ENCODE measurements at regions of chr11 and their contacts with region 1.

Region 1: GRCh38 chr11:65779851-65780577 is 762 bp downstream of the AP5B1 start:
- DNase-seq: peak; percentile 82
- H3K4me3 Mint-ChIP-seq: peak overlapping the region; percentile 84
- H3K27ac Mint-ChIP-seq: peak overlapping the region; percentile 90
- H3K4me1 Mint-ChIP-seq: peaks cover 12% of the 10 kb centered on the region
- H3K27me3 Mint-ChIP-seq: peaks cover 17% of the 10 kb centered on the region

Region 2: GRCh38 chr11:65540297-65541092 is 239.5 kb before region 1 on chr11:
- CTCF ChIA-PET with region 1: no interaction called
- POLR2A ChIA-PET with region 1: no interaction called
- DNase-seq: peak; percentile 85
- H3K4me3 Mint-ChIP-seq: peak overlapping the region; percentile 78
- H3K27ac Mint-ChIP-seq: peak overlapping the region; percentile 88
- H3K4me1 Mint-ChIP-seq: peaks cover 19% of the 10 kb centered on the region
- H3K27me3 Mint-ChIP-seq: no peaks in the 10 kb centered on the region

Region 3: GRCh38 chr11:65633390-65634108 is 146.5 kb before region 1 on chr11:
- CTCF ChIA-PET with region 1: no interaction called
- POLR2A ChIA-PET with region 1: no interaction called
- DNase-seq: peak; percentile 38
- H3K4me3 Mint-ChIP-seq: no peak overlapping the region
- H3K27ac Mint-ChIP-seq: peak overlapping the region; percentile 55
- H3K4me1 Mint-ChIP-seq: peaks cover 28% of the 10 kb centered on the region
- H3K27me3 Mint-ChIP-seq: no peaks in the 10 kb centered on the region

Region 4: GRCh38 chr11:65680192-65680743 is 99.7 kb before region 1 on chr11:
- CTCF ChIA-PET with region 1: no interaction called
- POLR2A ChIA-PET with region 1: no interaction called
- DNase-seq: no peak
- H3K4me3 Mint-ChIP-seq: no peak overlapping the region
- H3K27ac Mint-ChIP-seq: no peak overlapping the region
- H3K4me1 Mint-ChIP-seq: peaks cover 3% of the 10 kb centered on the region
- H3K27me3 Mint-ChIP-seq: peaks cover 5% of the 10 kb centered on the region

Region 5: GRCh38 chr11:65711785-65712632 is 68.0 kb before region 1 on chr11 and contains the start of gene KAT5:
- CTCF ChIA-PET with region 1: interaction called, 21 read pairs
- POLR2A ChIA-PET with region 1: no interaction called
- DNase-seq: peak; percentile 99
- H3K4me3 Mint-ChIP-seq: peak within 1 kb of the TSS; percentile 82
- H3K27ac Mint-ChIP-seq: peak within 1 kb of the TSS; percentile 97
- H3K4me1 Mint-ChIP-seq: peaks cover 35% of the 10 kb centered on the region
- H3K27me3 Mint-ChIP-seq: no peaks in the 10 kb centered on the region
- total RNA-seq, gene KAT5: 60.8 to 72.3 TPM

Region 6: DNA sequence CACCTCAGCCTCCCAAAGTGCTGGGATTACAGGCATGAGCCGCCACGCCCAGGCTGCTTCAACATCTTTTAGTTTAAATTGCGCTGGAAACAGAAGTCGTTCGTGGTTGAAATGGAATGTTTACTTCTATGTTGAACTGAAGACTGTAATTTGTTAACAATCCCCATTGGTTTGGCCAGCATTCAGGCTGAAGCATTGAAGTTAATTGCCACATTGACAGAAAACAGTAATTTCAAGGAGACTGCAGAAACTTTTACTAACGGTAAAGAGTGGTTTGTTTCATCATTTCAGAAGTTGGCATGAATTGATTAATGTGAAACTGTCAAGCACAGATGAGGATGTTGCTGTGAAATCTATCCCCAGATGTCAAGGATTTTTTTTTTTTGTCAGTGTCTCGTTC is 13.5 kb before region 1 on chr11:
- CTCF ChIA-PET with region 1: interaction called, 36 read pairs
- POLR2A ChIA-PET with region 1: no interaction called
- DNase-seq: no peak
- H3K4me3 Mint-ChIP-seq: no peak overlapping the region
- H3K27ac Mint-ChIP-seq: no peak overlapping the region
- H3K4me1 Mint-ChIP-seq: peaks cover 4% of the 10 kb centered on the region
- H3K27me3 Mint-ChIP-seq: peaks cover 5% of the 10 kb centered on the region

Region 7: GRCh38 chr11:65796726-65797601 is 16.9 kb after region 1 on chr11:
- CTCF ChIA-PET with region 1: interaction called, 73 read pairs
- POLR2A ChIA-PET with region 1: no interaction called
- DNase-seq: no peak
- H3K4me3 Mint-ChIP-seq: no peak overlapping the region
- H3K27ac Mint-ChIP-seq: no peak overlapping the region
- H3K4me1 Mint-ChIP-seq: peaks cover 7% of the 10 kb centered on the region
- H3K27me3 Mint-ChIP-seq: peaks cover 11% of the 10 kb centered on the region

Region 8: GRCh38 chr11:65817835-65818742 is 38.1 kb after region 1 on chr11:
- CTCF ChIA-PET with region 1: interaction called, 62 read pairs
- POLR2A ChIA-PET with region 1: interaction called, 4 read pairs
- DNase-seq: peak; percentile 93
- H3K4me3 Mint-ChIP-seq: peak overlapping the region; percentile 74
- H3K27ac Mint-ChIP-seq: peak overlapping the region; percentile 79
- H3K4me1 Mint-ChIP-seq: peaks cover 20% of the 10 kb centered on the region
- H3K27me3 Mint-ChIP-seq: peaks cover 4% of the 10 kb centered on the region

Region 9: GRCh38 chr11:65859200-65859811 is 79.3 kb after region 1 on chr11:
- CTCF ChIA-PET with region 1: interaction called, 22 read pairs
- POLR2A ChIA-PET with region 1: no interaction called
- DNase-seq: peak; percentile 99
- H3K4me3 Mint-ChIP-seq: peak overlapping the region; percentile 97
- H3K27ac Mint-ChIP-seq: peak overlapping the region; percentile 99
- H3K4me1 Mint-ChIP-seq: peaks cover 54% of the 10 kb centered on the region
- H3K27me3 Mint-ChIP-seq: no peaks in the 10 kb centered on the region